Activated naive CD4-positive, alpha-beta T cell treated with anti-CD3 and anti-CD28 coated beads for 36 hours (primary cell): ENCODE measurements at regions of chr10 and their contacts with region 1.

Region 1: DNA sequence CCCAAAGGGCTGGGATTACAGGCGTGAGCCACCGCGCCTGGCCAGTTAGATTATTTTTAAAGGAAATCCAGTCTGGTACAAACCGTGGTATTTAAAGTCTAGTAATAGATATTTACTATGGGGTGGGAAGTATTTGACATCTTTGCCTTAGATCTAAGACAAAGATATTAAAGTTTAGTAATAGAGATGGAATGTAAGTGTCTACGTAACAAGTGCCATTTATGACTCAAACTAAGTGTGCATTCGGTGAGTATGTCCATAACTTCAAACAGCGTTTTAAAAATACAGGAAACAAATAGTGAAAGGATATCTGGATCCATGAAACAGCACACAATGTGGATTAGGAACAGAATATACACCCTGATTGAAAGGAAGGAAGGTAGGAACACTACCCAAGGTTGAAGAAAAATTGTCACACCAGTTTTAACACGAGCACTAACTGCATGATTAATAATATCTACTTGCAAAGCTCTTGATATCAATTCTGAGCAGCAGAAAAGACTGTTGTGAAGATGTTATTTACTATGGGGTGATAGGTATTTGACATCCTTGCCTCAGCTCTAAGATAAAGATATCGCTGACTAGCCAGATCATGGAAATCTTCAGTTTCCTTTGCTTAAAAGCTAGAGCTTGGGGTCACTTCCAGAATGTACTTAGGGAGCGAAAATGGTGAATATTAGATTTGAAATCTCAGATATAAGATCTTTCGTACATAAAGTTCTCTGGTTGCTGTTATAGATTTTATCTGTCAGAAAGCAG is 48.7 kb downstream of the EPC1 start:
- DNase-seq: no peak
- H3K4me3 Mint-ChIP-seq: peak overlapping the region; percentile 33
- H3K27ac Mint-ChIP-seq: peak overlapping the region; percentile 68
- H3K4me1 Mint-ChIP-seq: peaks cover 62% of the 10 kb centered on the region
- H3K27me3 Mint-ChIP-seq: no peaks in the 10 kb centered on the region

Region 2: DNA sequence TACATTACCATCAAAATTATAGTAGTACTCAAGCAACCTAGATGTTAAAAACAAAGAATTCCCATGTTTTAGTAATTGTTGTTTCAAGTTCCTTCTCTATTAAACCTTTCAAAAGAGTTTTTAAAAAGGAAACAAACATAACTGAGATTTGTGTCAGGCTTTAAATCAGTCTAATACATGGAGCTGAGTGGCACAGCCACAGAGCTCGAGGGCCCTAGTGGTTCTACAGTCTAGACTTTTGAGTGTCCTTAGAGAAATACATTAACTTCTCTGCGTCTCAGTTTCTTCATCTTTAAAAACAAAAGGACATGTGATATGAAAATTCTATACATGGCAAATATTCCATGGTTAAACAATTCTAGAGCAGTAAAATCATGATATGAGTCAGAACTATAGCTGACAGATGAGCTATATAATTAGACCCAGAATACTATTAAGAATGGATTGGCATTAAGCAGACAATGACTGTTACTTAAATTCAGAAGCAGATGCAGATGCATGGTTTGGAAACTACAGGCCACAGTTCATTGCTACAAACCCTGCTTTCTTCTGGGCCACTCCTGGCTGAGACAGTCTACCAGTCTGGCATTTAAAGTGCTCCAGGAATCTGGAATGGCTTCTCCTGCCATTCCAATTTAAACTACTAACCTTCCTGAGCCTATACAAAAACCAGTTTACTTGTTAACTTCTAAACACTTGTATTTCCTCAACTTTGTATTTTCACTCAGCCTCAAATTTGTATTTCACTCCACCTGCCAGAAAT is 28.7 kb before region 1 on chr10:
- CTCF ChIA-PET with region 1: no interaction called
- intact Hi-C with region 1: no loop called
- DNase-seq: no peak
- H3K4me3 Mint-ChIP-seq: no peak overlapping the region
- H3K27ac Mint-ChIP-seq: peak overlapping the region; percentile 21
- H3K4me1 Mint-ChIP-seq: peaks cover 7% of the 10 kb centered on the region
- H3K27me3 Mint-ChIP-seq: no peaks in the 10 kb centered on the region

Region 3: DNA sequence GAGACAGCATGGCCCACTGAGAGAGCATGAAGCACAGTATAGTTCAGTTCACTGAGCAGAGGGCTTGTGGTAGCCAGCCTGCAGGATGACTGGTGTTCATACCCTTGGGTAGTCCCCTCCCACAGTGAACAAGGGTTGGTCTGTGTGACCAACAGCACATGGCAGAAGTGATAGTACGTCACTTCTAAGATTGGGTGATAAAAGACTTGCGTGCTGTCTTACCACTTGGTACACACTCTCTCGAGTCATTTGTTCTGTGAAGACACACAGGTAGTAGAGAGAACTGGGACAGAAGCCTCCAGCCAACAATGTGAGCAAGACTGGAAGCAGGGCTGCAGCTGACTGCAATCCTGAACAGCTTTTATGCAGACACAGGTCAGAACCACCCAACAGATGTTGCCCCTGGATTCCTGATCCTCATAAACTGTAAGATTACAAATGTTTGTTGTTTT is 34.1 kb after region 1 on chr10:
- CTCF ChIA-PET with region 1: no interaction called
- intact Hi-C with region 1: loop called (anchors 2 kb)
- DNase-seq: peak; percentile 89
- H3K4me3 Mint-ChIP-seq: peak overlapping the region; percentile 55
- H3K27ac Mint-ChIP-seq: peak overlapping the region; percentile 90
- H3K4me1 Mint-ChIP-seq: peaks cover 94% of the 10 kb centered on the region
- H3K27me3 Mint-ChIP-seq: no peaks in the 10 kb centered on the region